B cell (primary cell): ENCODE measurements at regions of chr20 and their contacts with region 1.

Region 1: GRCh38 chr20:50569864-50570836 is 60.0 kb downstream of the PTPN1 start:
- DNase-seq: peak; percentile 71
- ATAC-seq: peak; percentile 87
- H3K4me3 ChIP-seq: no peak overlapping the region
- H3K4me3 Mint-ChIP-seq: peak overlapping the region; percentile 36
- H3K27ac ChIP-seq: peak overlapping the region; percentile 24 to 83
- H3K27ac Mint-ChIP-seq: peak overlapping the region; percentile 89
- H3K4me1 ChIP-seq: peaks cover 26 to 38% of the 10 kb centered on the region in 2 donors
- H3K4me1 Mint-ChIP-seq: peaks cover 71% of the 10 kb centered on the region
- H3K27me3 ChIP-seq: no peaks in the 10 kb centered on the region
- H3K27me3 Mint-ChIP-seq: no peaks in the 10 kb centered on the region
- CTCF ChIP-seq: peak; percentile 54

Region 2: GRCh38 chr20:50460460-50461267 is 109.5 kb before region 1 on chr20:
- CTCF ChIA-PET with region 1: interaction called, 169 read pairs
- POLR2A ChIA-PET with region 1: no interaction called
- intact Hi-C with region 1: loop called (anchors 5 kb)
- DNase-seq: peak; percentile 78
- ATAC-seq: peak; percentile 81
- H3K4me3 ChIP-seq: no peak overlapping the region
- H3K4me3 Mint-ChIP-seq: no peak overlapping the region
- H3K27ac ChIP-seq: no peak overlapping the region
- H3K27ac Mint-ChIP-seq: no peak overlapping the region
- H3K4me1 ChIP-seq: peaks cover 3 to 7% of the 10 kb centered on the region in 2 donors
- H3K4me1 Mint-ChIP-seq: peaks cover 2% of the 10 kb centered on the region
- H3K27me3 ChIP-seq: peaks cover 0 to 21% (median 5%) of the 10 kb centered on the region in 4 experiments
- H3K27me3 Mint-ChIP-seq: peaks cover 24% of the 10 kb centered on the region
- CTCF ChIP-seq: peak; percentile 85

Region 3: DNA sequence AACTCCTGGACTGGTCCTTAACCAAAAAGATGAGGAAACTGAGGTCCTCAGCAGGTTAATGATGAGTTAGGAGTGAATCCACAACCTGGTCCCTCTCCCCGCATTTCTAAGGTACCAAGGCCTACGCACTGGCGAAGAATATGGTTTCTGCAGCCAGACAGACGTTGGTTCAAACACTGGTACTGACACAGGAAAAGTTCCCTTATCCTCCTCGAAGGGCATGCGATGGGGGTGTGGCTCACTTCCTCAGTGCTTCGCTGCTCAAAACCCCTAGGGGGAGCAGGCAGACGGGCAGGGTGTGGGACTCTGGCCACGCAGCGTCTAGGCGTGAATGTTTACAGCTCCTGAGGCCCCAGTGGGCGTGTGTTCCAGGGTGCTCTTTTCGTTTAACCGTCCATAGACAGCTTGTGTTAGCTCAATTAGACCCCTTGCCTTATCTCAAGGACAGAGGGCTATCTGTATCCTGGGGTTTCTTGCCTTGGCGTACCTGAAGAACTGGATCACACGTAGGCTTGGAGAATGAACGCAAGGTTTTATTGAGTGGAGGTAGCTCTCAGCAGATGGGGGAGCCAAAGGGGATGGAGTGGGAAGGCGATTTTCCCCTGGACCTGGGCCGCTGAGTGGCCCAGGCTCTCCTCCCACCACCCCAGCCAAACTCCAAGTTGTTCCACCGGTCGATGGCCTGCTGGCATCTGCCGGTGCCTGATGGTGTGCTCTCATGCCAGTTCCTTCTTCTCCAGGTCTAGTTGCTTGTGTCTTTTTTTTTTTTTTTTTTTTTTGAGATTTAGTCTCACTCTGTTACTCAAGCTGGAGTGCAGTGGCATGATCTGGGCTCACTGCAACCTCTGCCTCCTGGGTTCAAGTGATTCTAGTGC is 91.8 kb before region 1 on chr20:
- CTCF ChIA-PET with region 1: interaction called, 169 read pairs
- POLR2A ChIA-PET with region 1: interaction called, 8 read pairs
- intact Hi-C with region 1: loop called (anchors 1 kb)
- DNase-seq: peak; percentile 84
- ATAC-seq: peak; percentile 99
- H3K4me3 ChIP-seq: no peak overlapping the region
- H3K4me3 Mint-ChIP-seq: peak overlapping the region; percentile 44
- H3K27ac ChIP-seq: no peak overlapping the region
- H3K27ac Mint-ChIP-seq: peak overlapping the region; percentile 67
- H3K4me1 ChIP-seq: peaks cover 20 to 32% of the 10 kb centered on the region in 2 donors
- H3K4me1 Mint-ChIP-seq: peaks cover 33% of the 10 kb centered on the region
- H3K27me3 ChIP-seq: no peaks in the 10 kb centered on the region
- H3K27me3 Mint-ChIP-seq: no peaks in the 10 kb centered on the region
- CTCF ChIP-seq: peak; percentile 73

Region 4: DNA sequence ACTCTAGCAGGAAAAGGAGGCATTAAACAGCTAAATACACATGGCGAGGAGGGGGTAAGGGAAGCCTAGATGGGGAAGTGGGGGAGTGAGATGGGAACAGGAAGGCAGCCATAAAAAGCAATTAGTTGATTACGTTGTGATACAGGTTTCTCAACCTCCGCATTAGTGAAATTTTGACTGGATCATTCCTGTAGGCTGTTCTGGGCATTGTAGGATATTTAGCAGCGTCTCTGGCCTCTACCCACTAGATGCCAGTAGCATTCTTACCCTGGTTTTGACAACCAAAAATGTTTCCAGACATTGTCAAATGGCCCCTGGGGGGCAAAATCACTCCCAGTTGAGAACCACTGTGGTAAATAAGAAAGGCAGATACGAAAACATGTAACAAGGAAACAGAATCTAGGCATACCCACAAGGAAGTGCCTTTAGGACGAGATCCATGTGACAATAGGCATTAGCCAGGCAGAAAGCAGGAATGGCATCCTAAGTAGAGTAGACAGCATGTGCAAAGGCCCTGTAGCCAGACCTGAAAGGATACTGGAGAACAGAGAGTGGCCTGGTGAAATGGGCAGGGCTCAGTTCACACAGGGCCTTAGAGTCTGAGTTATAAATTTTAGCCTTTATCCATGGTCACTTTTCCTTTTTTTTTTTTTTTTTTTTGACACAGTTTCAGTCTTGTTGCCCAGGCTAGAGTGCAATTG is 85.7 kb before region 1 on chr20:
- CTCF ChIA-PET with region 1: interaction called, 54 read pairs
- POLR2A ChIA-PET with region 1: interaction called, 8 read pairs
- intact Hi-C with region 1: no loop called
- DNase-seq: no peak
- ATAC-seq: no peak
- H3K4me3 ChIP-seq: peak overlapping the region in 2 of 5 experiments; percentile 78 to 83
- H3K4me3 Mint-ChIP-seq: peak overlapping the region; percentile 92
- H3K27ac ChIP-seq: peak overlapping the region; percentile 89
- H3K27ac Mint-ChIP-seq: peak overlapping the region; percentile 90
- H3K4me1 ChIP-seq: peaks cover 27 to 39% of the 10 kb centered on the region in 2 donors
- H3K4me1 Mint-ChIP-seq: peaks cover 42% of the 10 kb centered on the region
- H3K27me3 ChIP-seq: no peaks in the 10 kb centered on the region
- H3K27me3 Mint-ChIP-seq: no peaks in the 10 kb centered on the region
- CTCF ChIP-seq: no peak

Region 5: DNA sequence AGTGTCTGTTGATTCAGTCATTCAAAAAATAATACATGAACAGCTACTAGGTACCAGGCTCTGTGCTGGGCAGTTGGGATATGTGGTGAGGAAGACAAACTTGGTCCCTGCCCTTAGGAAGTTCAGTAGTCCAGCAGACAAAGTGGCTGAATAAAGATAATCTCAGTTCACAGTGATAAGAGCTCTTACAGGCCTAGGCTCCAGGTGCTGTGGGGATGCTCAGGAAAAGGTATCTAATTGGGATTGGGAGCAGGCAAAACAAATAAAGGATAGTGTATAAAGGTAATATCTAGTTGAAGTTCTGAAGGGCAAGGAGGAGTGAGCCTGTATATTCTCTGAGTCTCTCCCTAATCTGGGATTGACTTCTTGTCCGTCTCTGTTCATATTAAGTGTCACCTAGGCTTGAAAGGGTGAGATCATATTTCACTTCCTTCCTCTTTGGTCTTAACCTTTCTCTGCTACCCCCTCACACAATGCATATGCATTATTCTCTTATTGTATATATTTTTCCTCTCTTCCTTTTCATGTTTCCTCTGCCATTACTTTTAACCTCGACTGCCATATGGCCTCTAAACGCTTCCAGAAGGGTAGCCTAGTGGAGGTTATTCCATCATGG is 46.5 kb before region 1 on chr20:
- CTCF ChIA-PET with region 1: interaction called, 10 read pairs
- POLR2A ChIA-PET with region 1: no interaction called
- intact Hi-C with region 1: no loop called
- DNase-seq: peak; percentile 46
- ATAC-seq: peak; percentile 37
- H3K4me3 ChIP-seq: peak overlapping the region in 4 of 5 experiments; percentile 9 to 26 (median 13)
- H3K4me3 Mint-ChIP-seq: peak overlapping the region; percentile 54
- H3K27ac ChIP-seq: peak overlapping the region; percentile 53 to 95
- H3K27ac Mint-ChIP-seq: peak overlapping the region; percentile 88
- H3K4me1 ChIP-seq: peaks cover 94 to 95% of the 10 kb centered on the region in 2 donors
- H3K4me1 Mint-ChIP-seq: peaks cover 51% of the 10 kb centered on the region
- H3K27me3 ChIP-seq: no peaks in the 10 kb centered on the region
- H3K27me3 Mint-ChIP-seq: no peaks in the 10 kb centered on the region
- CTCF ChIP-seq: no peak

Region 6: DNA sequence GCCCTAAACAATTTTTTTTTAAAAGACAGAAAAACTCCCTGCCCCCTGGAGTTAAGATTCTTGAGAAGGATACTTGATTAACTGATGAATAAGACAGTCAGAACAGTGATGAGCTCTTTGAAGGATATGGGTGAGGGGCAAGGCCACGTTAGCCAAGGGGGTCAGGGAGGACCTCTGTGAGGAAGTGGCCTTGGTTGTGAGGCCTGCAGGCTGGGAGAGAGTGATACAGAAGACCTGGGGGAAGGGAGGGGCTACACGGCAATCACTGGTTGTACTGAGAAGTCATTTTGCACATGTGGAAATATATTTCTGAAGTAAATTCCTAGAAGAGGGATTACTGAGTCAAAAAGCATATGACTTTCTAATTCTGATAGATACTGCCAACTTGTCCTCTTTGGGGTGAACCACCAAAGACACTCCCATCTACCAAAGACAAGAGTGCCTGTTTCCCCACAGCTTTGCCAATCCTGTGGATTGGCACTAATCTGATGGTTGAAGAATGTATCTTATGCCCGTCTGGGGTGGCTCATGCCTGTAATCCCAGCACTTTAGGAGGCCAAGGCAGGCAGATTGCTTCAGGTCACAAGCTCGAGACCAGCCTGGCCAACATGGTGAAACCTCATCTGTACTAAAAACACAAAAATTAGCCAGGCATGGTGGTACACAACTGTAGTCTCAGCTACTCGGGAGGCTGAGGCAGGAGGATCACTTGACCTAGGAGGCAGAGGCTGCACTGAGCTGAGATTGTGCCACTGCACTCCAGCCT is 202.5 kb after region 1 on chr20:
- CTCF ChIA-PET with region 1: no interaction called
- POLR2A ChIA-PET with region 1: no interaction called
- intact Hi-C with region 1: no loop called
- DNase-seq: no peak
- ATAC-seq: no peak
- H3K4me3 ChIP-seq: no peak overlapping the region
- H3K4me3 Mint-ChIP-seq: no peak overlapping the region
- H3K27ac ChIP-seq: no peak overlapping the region
- H3K27ac Mint-ChIP-seq: no peak overlapping the region
- H3K4me1 ChIP-seq: no peaks in the 10 kb centered on the region
- H3K4me1 Mint-ChIP-seq: no peaks in the 10 kb centered on the region
- H3K27me3 ChIP-seq: peaks cover 0 to 7% (median 0%) of the 10 kb centered on the region in 4 experiments
- H3K27me3 Mint-ChIP-seq: peaks cover 3% of the 10 kb centered on the region
- CTCF ChIP-seq: no peak

Region 7: DNA sequence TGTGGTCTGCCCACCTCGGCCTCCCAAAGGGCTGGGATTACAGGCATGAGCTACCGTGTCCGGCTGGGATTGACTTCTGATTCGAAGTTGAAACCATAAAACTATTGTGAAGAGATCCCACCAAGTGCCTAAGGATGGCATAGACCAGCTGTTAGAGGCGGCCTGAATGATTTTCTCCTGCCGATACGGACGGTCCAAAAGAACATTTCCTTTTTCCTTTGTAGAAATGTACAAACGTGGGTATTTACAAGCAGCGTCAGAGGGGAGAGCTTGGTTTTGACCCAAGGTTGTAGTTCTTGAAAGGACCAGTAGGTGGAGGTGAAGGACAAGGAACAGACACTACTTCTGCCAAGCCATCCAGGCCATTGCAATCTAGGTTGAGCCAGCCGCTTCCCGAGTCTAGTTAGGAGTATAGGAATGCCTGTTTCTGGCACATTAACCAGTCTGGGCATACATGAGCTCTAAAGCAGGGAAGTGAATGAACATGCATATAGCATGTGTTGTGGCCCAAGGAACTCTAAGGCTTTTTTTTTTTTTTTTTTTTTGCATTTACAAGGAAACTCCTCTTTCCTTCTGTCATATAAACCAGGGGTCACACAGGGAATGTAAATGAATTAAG is 417.6 kb after region 1 on chr20:
- CTCF ChIA-PET with region 1: no interaction called
- POLR2A ChIA-PET with region 1: no interaction called
- intact Hi-C with region 1: no loop called
- DNase-seq: peak; percentile 86
- ATAC-seq: peak; percentile 99
- H3K4me3 ChIP-seq: no peak overlapping the region
- H3K4me3 Mint-ChIP-seq: no peak overlapping the region
- H3K27ac ChIP-seq: no peak overlapping the region
- H3K27ac Mint-ChIP-seq: peak overlapping the region; percentile 11
- H3K4me1 ChIP-seq: peaks cover 10 to 11% of the 10 kb centered on the region in 2 donors
- H3K4me1 Mint-ChIP-seq: peaks cover 12% of the 10 kb centered on the region
- H3K27me3 ChIP-seq: peaks cover 0 to 15% (median 4%) of the 10 kb centered on the region in 4 experiments
- H3K27me3 Mint-ChIP-seq: peaks cover 23% of the 10 kb centered on the region
- CTCF ChIP-seq: peak; percentile 87